Activated CD8-positive, alpha-beta memory T cell treated with anti-CD3 and anti-CD28 coated beads, Interleukin-2, amount 10 ng/mL, durations not matched to agents 7 days and 5 days (primary cell): ENCODE measurements at regions of chr2 and their contacts with region 1.

Region 1: GRCh38 chr2:157492189-157492773 is 48.4 kb upstream of the CYTIP start:
- DNase-seq: peak; percentile 86
- ATAC-seq: peak; percentile 91
- H3K4me3 Mint-ChIP-seq: no peak overlapping the region
- H3K27ac Mint-ChIP-seq: no peak overlapping the region
- H3K4me1 Mint-ChIP-seq: peaks cover 63% of the 10 kb centered on the region
- H3K27me3 Mint-ChIP-seq: no peaks in the 10 kb centered on the region

Region 2: DNA sequence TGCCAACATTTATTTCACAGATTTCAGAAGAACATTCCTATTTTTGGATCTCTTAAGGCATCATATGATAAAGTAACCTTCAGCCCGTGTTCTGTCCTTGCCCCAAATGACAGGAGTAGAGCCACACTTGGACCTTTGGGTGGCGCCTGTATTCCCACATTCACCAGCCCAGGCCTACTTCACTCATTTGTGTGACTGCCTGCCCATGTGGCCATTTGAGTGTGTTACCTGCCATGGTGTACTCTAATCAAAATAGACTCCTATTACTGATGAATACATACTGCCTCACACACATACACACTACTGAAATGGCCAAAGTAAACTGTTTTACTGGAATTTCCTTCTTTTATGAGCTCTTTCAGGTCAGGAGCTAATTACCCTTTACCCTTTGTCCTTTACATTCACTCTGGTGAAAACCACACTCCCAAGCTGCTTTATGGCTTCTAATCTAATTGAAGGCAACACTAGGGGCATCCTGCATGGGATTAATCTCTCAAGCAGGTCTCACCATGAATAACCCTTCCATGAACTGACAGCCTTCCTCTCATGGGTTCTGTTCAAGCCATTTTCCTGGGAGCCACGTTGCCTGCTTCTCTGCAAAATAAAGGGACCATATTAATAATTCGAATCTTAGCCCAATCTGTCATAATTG is 505.8 kb before region 1 on chr2:
- CTCF ChIA-PET with region 1: no interaction called
- DNase-seq: no peak
- ATAC-seq: no peak
- H3K4me3 Mint-ChIP-seq: no peak overlapping the region
- H3K27ac Mint-ChIP-seq: no peak overlapping the region
- H3K4me1 Mint-ChIP-seq: no peaks in the 10 kb centered on the region
- H3K27me3 Mint-ChIP-seq: no peaks in the 10 kb centered on the region

Region 3: DNA sequence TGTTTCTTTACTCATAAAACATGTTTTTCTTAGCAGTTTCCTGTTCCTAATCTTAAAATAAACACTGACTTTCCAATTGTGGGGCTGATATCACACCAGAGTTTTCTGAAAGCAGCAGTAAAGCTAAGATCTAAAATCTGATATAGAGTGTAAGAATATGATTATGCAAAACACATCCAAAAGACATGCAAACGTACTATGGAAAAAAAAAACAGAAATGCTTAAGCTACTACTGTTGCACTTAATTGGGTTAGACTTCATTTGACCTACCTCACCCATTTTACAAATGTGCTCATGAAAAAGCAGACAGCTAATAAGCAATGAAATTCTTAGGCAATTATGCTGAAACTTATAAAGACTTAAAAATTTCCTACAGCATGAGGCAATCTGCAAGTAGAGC is 58.9 kb before region 1 on chr2:
- CTCF ChIA-PET with region 1: interaction called, 12 read pairs
- DNase-seq: no peak
- ATAC-seq: peak; percentile 10
- H3K4me3 Mint-ChIP-seq: peak overlapping the region; percentile 100
- H3K27ac Mint-ChIP-seq: peak overlapping the region; percentile 84
- H3K4me1 Mint-ChIP-seq: peaks cover 83% of the 10 kb centered on the region
- H3K27me3 Mint-ChIP-seq: no peaks in the 10 kb centered on the region

Region 4: GRCh38 chr2:157480182-157480961 is 11.9 kb before region 1 on chr2:
- CTCF ChIA-PET with region 1: interaction called, 16 read pairs
- DNase-seq: peak; percentile 83
- ATAC-seq: peak; percentile 71
- H3K4me3 Mint-ChIP-seq: peak overlapping the region; percentile 74
- H3K27ac Mint-ChIP-seq: peak overlapping the region; percentile 96
- H3K4me1 Mint-ChIP-seq: peaks cover 72% of the 10 kb centered on the region
- H3K27me3 Mint-ChIP-seq: no peaks in the 10 kb centered on the region

Region 5: GRCh38 chr2:157628477-157629415 is 136.5 kb after region 1 on chr2 and contains the start of gene ACVR1C:
- CTCF ChIA-PET with region 1: interaction called, 14 read pairs
- DNase-seq: peak; percentile 81
- ATAC-seq: peak; percentile 90
- H3K4me3 Mint-ChIP-seq: peak within 1 kb of the TSS; percentile 79
- H3K27ac Mint-ChIP-seq: peak within 1 kb of the TSS; percentile 73
- H3K4me1 Mint-ChIP-seq: peaks cover 32% of the 10 kb centered on the region
- H3K27me3 Mint-ChIP-seq: peaks cover 19% of the 10 kb centered on the region
- total RNA-seq, gene ACVR1C: 1.2 to 2.4 TPM

Region 6: GRCh38 chr2:158024288-158024898 is 532.1 kb after region 1 on chr2:
- CTCF ChIA-PET with region 1: interaction called, 10 read pairs
- DNase-seq: peak; percentile 64
- ATAC-seq: peak; percentile 75
- H3K4me3 Mint-ChIP-seq: no peak overlapping the region
- H3K27ac Mint-ChIP-seq: no peak overlapping the region
- H3K4me1 Mint-ChIP-seq: no peaks in the 10 kb centered on the region
- H3K27me3 Mint-ChIP-seq: no peaks in the 10 kb centered on the region